ENCODE measurements at regions of chr17 and their contacts with region 1.

Region 1: GRCh38 chr17:4004517-4005295 is 40.5 kb upstream of the ATP2A3 start:
- DNase-seq: peak; percentile 45 to 75
- H3K4me3 ChIP-seq: no peak overlapping the region
- H3K4me1 ChIP-seq: no peaks in the 10 kb centered on the region
- H3K27me3 ChIP-seq: no peaks in the 10 kb centered on the region

Region 2: DNA sequence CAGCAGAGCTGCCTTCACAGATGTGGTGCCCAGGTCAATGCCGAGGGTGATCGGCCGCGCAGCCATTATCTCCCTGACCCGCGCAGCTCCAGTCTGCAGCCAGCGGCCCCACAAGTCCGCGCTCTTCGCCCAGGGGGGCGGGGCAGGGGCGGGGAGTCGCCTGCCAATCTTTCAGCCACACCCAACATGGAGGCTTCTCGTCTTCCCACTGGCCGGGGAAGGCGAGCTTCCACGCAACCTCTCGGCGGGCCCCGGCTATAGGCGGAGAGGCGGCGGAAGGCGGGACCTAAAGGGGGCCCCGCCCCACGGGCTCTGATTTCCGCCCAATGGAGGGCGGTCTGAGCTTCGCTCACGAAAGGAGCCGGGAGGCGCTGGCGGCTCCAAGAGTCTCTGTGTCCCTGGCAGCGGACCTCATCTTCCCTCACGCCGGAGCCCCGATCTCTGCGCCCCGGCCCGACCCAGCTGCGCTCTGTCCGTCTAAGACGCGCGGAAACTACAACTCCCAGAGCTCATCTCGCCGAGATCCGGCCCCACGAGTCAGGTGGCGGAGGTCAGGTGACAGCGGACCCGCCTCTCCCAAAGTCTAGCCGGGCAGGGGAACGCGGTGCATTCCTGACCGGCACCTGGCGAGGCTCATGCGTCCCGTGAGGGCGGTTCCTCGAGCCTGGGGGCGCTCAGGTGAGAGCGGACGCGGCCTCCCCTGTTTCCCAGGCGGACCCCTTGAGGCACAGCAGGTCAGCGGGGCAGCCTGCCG is 368.4 kb before region 1 on chr17 and contains the starts of genes CTNS and SHPK:
- in situ Hi-C with region 1: no loop called
- DNase-seq: peak; percentile 93 to 97
- H3K4me3 ChIP-seq: peak within 1 kb of the TSS; percentile 98
- H3K4me1 ChIP-seq: peaks cover 4% of the 10 kb centered on the region
- H3K27me3 ChIP-seq: no peaks in the 10 kb centered on the region

Region 3: GRCh38 chr17:3738562-3739295 is 266.0 kb before region 1 on chr17:
- in situ Hi-C with region 1: loop called (anchors 10 kb)
- DNase-seq: no peak
- H3K4me3 ChIP-seq: no peak overlapping the region
- H3K4me1 ChIP-seq: no peaks in the 10 kb centered on the region
- H3K27me3 ChIP-seq: no peaks in the 10 kb centered on the region

Region 4: GRCh38 chr17:3913531-3914311 is 91.0 kb before region 1 on chr17:
- in situ Hi-C with region 1: loop called (anchors 5 kb)
- DNase-seq: peak; percentile 33 to 88
- H3K4me3 ChIP-seq: no peak overlapping the region
- H3K4me1 ChIP-seq: no peaks in the 10 kb centered on the region
- H3K27me3 ChIP-seq: no peaks in the 10 kb centered on the region

Region 5: DNA sequence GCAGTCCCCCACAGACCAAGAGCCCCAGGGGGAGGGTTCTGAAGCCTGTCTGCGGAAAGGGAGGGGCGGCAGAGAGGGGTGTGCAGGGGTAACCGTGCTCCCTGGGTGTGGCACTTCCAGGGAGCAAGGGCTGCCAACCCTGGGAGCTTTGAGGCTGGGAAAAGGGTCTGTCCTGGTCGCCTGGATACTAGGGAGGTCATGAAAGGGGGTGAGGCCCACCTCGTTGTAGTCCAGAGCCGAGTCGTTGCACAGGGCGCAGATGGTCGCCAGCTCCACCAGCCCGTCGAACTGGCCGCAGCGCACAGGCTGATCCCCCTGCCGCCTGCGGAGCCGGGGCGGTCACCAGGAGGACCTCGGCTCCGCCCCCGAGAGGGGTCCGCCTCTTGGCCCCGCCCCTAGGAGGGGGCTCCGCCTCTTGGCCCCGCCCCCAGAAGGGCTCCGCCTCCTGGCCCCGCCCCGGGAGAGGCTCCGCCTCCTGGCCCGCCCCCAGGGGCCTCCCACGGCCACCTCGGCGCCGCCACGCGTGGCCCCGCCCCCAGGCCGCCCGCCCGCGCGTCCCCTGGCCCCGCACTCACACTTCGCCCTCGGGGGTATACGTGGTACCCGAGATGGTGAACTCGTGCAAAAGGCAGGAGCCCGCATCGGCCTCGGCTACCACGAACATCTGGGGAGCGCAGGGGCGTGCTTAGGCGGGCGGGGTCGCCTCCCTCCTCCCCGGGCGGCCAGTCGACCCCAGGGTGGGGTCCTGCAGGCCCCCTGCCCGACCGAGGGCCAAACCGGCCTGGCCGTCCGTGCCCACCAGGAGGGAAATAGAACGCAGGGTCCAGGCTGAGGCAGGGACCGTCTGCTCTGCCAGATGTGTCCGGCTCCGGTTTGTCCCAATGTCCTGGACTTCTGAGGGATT is 60.0 kb before region 1 on chr17:
- in situ Hi-C with region 1: no loop called
- DNase-seq: peak in 1 of 2 experiments; percentile 44
- H3K4me3 ChIP-seq: no peak overlapping the region
- H3K4me1 ChIP-seq: no peaks in the 10 kb centered on the region
- H3K27me3 ChIP-seq: no peaks in the 10 kb centered on the region

Region 6: DNA sequence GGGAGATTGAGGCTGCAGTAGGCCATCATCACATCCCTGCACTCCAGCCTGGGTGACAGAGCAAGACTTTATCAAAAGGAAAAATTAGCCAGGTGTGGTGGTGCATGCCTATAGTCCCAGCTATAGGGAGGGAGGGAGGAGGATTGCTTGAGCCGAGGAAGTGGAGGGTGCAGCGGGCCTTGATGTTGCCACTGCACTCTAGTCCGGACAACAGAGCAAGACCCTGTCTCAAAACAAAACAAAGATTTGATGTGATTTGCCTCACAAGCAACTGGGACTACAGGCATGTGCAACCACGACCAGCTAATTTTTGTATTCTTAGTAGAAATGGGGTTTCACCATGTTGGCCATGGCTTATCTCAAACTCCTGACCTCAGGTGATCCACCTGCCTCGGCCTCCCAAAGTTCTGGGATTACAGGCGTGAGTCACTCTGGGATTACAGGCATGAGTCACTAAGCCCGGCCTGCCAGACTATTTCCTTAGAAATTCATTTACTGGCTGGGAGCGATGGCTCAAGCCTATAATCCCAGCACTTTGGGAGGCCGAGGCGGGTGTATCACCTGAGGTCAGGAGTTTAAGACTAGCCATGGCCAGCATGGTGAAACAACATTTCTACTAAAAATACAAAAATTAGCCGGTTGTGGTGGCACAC is 350.3 kb after region 1 on chr17:
- in situ Hi-C with region 1: no loop called
- DNase-seq: no peak
- H3K4me3 ChIP-seq: no peak overlapping the region
- H3K4me1 ChIP-seq: no peaks in the 10 kb centered on the region
- H3K27me3 ChIP-seq: no peaks in the 10 kb centered on the region

Measured in HAP-1 (cell line).